ENCODE measurements at regions of chr22 and their contacts with region 1.

Region 1: GRCh38 chr22:36546092-36546804 is 17.3 kb upstream of the EIF3D start:
- DNase-seq: no peak
- H3K4me3 ChIP-seq: no peak overlapping the region
- H3K27ac ChIP-seq: no peak overlapping the region
- H3K4me1 ChIP-seq: peaks cover 29% of the 10 kb centered on the region
- H3K27me3 ChIP-seq: peaks cover 4% of the 10 kb centered on the region
- CTCF ChIP-seq: peak; percentile 41 to 64

Region 2: GRCh38 chr22:36506637-36507517 is 39.4 kb before region 1 on chr22 and contains the start of gene FOXRED2:
- CTCF ChIA-PET with region 1: no interaction called
- dilution Hi-C with region 1: no loop called
- in situ Hi-C with region 1: no loop called
- intact Hi-C with region 1: no loop called
- DNase-seq: peak; percentile 64
- H3K4me3 ChIP-seq: peak within 1 kb of the TSS; percentile 41 to 54 (median 49)
- H3K27ac ChIP-seq: no peak within 1 kb of the TSS
- H3K4me1 ChIP-seq: peaks cover 14% of the 10 kb centered on the region
- H3K27me3 ChIP-seq: no peaks in the 10 kb centered on the region
- CTCF ChIP-seq: no peak
- total RNA-seq, gene FOXRED2: 5.8 to 7.4 TPM

Region 3: DNA sequence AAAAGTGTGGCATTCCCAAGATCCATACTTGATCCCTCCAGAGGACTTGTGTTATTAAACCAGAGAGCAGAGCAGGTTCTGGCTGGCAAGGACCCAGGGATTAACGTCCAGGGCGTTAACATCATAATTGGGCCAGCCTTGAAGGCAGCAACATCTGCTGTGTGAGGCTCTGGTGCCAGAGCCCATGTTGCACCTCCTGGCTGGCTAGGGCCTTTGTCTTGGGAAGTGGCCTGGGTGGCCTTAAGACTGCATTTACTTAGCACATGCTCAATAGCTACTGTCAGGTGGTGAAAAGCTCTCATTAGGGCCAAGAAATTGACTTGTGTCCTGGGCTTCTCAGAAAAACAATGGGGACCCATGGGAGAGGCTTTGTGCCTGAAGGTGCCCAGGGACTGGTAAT is 90.7 kb after region 1 on chr22:
- CTCF ChIA-PET with region 1: interaction called, 4 read pairs
- dilution Hi-C with region 1: loop called (anchors 5 kb)
- in situ Hi-C with region 1: no loop called
- intact Hi-C with region 1: no loop called
- DNase-seq: no peak
- H3K4me3 ChIP-seq: no peak overlapping the region
- H3K27ac ChIP-seq: no peak overlapping the region
- H3K4me1 ChIP-seq: peaks cover 1% of the 10 kb centered on the region
- H3K27me3 ChIP-seq: no peaks in the 10 kb centered on the region
- CTCF ChIP-seq: no peak

Region 4: DNA sequence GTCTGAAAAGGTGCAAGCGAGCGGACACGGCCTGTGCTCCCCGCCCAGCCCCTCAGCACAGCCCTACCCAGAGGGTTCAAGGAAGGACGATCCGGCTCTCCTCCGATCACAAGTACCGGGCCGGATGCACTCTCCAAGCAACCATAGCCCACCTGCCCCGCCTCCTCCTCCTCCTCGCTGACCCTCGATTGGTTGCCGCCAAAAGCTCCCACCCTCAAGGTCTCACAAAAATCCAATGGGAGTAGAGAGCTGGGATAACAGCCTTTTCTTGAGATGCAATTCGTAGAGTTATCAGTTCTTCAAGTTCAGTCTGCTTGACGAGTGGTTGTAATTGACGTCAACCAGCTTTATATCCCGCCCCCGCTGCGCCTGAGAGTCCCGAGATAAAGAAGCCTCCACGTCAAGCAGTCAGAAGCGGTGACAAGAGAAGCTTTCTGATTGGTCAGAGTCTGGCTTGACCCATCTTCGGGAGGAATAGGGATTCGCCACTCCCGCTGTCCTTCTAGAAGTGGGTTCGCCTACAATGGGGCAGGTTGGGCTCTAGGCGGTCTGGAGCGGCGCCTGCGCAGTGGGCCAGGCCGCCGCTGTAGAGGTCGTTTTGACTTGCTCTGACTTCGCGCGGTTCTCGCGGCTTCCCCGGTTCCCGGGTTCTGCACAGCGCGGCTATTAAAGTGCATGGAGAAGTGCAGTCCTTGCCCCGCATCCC is 229.9 kb after region 1 on chr22 and contains the start of gene IFT27:
- CTCF ChIA-PET with region 1: interaction called, 4 read pairs
- dilution Hi-C with region 1: no loop called
- in situ Hi-C with region 1: loop called in 1 of 2 experiments (anchors 10 kb)
- intact Hi-C with region 1: loop called (anchors 2 kb)
- DNase-seq: peak; percentile 100
- H3K4me3 ChIP-seq: peak within 1 kb of the TSS; percentile 72 to 85 (median 80)
- H3K27ac ChIP-seq: peak within 1 kb of the TSS; percentile 42
- H3K4me1 ChIP-seq: peaks cover 11% of the 10 kb centered on the region
- H3K27me3 ChIP-seq: no peaks in the 10 kb centered on the region
- CTCF ChIP-seq: no peak
- total RNA-seq, gene IFT27: 13.7 to 22.3 TPM

Region 5: GRCh38 chr22:36856121-36856791 is 310.0 kb after region 1 on chr22:
- CTCF ChIA-PET with region 1: interaction called, 8 read pairs
- dilution Hi-C with region 1: no loop called
- in situ Hi-C with region 1: loop called in 1 of 2 experiments (anchors 10 kb)
- intact Hi-C with region 1: loop called (anchors 1 kb)
- DNase-seq: peak; percentile 71
- H3K4me3 ChIP-seq: no peak overlapping the region
- H3K27ac ChIP-seq: no peak overlapping the region
- H3K4me1 ChIP-seq: peaks cover 8% of the 10 kb centered on the region
- H3K27me3 ChIP-seq: no peaks in the 10 kb centered on the region
- CTCF ChIP-seq: peak; percentile 99 to 100

Region 6: DNA sequence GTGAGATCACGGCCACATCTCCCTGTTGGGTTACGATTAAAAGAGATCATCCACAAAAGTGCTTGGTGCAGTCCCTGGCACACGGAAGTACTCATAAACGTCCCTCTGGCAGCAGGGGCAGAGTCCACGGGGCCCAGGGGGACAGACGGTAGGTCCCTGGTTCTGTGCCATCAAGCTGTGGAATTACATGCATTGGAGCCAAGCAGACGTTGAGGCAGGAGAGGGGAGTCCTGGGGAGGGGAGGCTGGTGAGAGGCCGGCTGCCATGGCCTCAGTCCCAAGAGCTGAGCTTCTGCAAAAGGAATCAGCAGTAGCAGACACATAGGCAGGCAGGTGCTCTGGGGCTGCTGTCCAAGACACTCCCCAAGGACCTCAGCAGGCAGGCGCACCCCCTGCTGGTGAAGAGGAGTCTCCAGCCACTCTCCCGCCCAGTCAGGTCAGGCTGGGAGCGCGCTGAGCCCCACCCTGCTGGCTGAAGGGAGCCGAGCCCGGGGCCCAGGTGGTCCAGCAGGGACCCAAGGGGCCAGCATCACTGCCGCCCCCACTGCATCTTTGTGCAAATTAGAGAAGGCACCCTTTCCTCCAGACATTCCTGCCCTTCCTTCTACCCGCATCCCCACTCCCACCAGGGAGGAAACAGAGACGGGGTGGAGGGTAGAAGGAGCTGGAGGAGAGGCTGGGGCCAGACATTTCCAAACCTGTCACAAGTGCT is 497.7 kb after region 1 on chr22:
- CTCF ChIA-PET with region 1: no interaction called
- dilution Hi-C with region 1: no loop called
- in situ Hi-C with region 1: no loop called
- intact Hi-C with region 1: loop called (anchors 5 kb)
- DNase-seq: peak; percentile 58
- H3K4me3 ChIP-seq: no peak overlapping the region
- H3K27ac ChIP-seq: no peak overlapping the region
- H3K4me1 ChIP-seq: peaks cover 6% of the 10 kb centered on the region
- H3K27me3 ChIP-seq: no peaks in the 10 kb centered on the region
- CTCF ChIP-seq: peak; percentile 73 to 91